ENCODE measurements at regions of chr19 and their contacts with region 1.

Region 1: DNA sequence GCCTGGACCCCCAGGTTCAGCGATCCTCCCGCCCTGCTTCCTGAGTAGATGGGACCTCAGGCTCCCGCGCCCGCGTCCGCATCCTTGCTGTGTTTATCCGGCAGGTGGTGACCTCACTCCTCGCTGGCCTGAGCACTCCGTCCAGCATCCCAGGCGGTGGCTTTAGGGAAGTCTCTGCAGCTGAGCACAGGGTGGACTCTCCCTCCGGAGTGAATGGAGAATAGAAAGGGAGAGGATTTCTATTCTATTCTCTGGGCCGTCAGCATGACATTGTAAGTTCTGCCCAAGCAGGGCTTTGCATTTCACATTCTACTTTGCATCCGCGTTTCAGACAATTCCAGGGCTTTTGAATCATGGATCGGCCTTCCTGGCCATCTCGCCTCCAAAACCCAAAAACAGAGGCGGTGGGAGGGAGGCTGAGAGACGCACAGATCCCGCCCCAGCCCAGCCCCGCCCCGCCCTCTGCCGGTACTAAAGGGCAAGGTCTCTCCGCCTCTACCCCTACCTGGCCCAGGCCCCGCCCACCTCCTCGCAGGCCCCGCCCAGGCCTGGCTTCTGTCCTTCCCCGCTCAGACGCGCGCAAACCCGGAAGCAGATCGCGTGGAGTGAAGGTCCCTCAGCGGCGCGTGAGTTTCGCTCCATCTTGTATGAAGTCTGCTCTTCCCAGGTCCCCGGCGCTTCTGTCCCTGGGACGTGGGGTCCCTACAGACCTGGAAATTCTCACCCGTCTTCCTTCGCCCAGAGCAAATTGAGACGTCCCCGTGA is at the start of gene ZNF525:
- DNase-seq: peak; percentile 81 to 94
- H3K4me3 ChIP-seq: peak within 1 kb of the TSS; percentile 63 to 67
- H3K27ac ChIP-seq: peak within 1 kb of the TSS; percentile 73 to 81
- H3K4me1 ChIP-seq: peaks cover 0 to 6% of the 10 kb centered on the region in 2 donors
- H3K27me3 ChIP-seq: no peaks in the 10 kb centered on the region
- CTCF ChIP-seq: peak in 1 of 3 experiments; percentile 26
- total RNA-seq, gene ZNF525: 3.0 TPM

Region 2: GRCh38 chr19:52690369-52691214 is 674.7 kb before region 1 on chr19:
- intact Hi-C with region 1: loop called (anchors 10 kb)
- DNase-seq: peak; percentile 89 to 98
- H3K4me3 ChIP-seq: peak overlapping the region; percentile 56 to 89
- H3K27ac ChIP-seq: peak overlapping the region; percentile 95 to 98
- H3K4me1 ChIP-seq: peaks cover 3 to 28% of the 10 kb centered on the region in 2 donors
- H3K27me3 ChIP-seq: no peaks in the 10 kb centered on the region
- CTCF ChIP-seq: peak in 2 of 3 experiments; percentile 16 to 19

Region 3: GRCh38 chr19:53333463-53334449 is 31.6 kb before region 1 on chr19 and contains the start of gene ZNF845:
- intact Hi-C with region 1: loop called (anchors 1 kb)
- DNase-seq: peak; percentile 75 to 98
- H3K4me3 ChIP-seq: peak within 1 kb of the TSS; percentile 66 to 73
- H3K27ac ChIP-seq: peak within 1 kb of the TSS; percentile 77 to 82
- H3K4me1 ChIP-seq: peaks cover 0 to 4% of the 10 kb centered on the region in 2 donors
- H3K27me3 ChIP-seq: no peaks in the 10 kb centered on the region
- CTCF ChIP-seq: no peak
- total RNA-seq, gene ZNF845: 3.1 TPM

Region 4: GRCh38 chr19:53394974-53395839 is 29.9 kb after region 1 on chr19 and contains the start of gene ZNF765:
- intact Hi-C with region 1: loop called (anchors 1 kb)
- DNase-seq: peak; percentile 82 to 97
- H3K4me3 ChIP-seq: peak within 1 kb of the TSS; percentile 65 to 68
- H3K27ac ChIP-seq: peak within 1 kb of the TSS; percentile 80 to 83
- H3K4me1 ChIP-seq: peaks cover 0 to 13% of the 10 kb centered on the region in 2 donors
- H3K27me3 ChIP-seq: no peaks in the 10 kb centered on the region
- CTCF ChIP-seq: peak; percentile 47 to 58 (median 55)
- total RNA-seq, gene ZNF765: 3.5 TPM

Region 5: DNA sequence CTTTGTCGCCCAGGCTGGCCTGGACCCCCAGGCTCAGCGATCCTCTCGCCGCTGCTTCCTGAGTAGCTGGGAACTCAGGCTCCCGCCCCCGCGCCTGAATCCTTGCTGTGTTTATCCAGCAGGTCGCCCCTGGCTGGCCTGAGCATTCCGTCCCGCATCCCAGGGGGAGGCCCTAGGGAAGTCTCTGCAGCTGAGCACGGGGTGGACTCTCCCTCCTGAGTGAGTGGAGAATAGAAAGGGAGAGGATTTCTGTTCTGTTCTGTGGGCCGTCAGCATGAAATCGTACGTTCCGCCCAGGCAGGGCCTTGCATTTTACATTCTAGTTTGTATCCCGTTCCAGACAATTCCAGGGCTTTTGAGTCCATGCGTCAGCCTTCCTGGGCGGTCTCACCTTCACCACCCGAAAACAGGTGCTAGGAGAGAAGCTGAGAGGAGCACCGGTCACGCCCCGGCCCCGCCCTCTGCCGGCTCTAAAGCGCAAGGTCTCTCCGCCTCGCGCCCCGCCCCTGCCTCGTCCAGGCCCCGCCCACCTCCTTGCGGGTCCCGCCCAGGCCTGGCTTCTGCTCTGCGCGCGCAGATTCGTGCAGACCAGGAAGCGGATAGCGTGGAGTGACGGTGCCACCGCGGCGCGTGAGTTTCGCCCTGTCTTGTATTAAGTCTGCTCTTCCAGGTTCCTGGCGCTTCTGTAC is 66.2 kb after region 1 on chr19 and contains the start of gene ZNF761:
- intact Hi-C with region 1: loop called (anchors 5 kb)
- DNase-seq: peak; percentile 73 to 97
- H3K4me3 ChIP-seq: peak within 1 kb of the TSS; percentile 66 to 96
- H3K27ac ChIP-seq: peak within 1 kb of the TSS; percentile 67 to 77
- H3K4me1 ChIP-seq: no peaks in the 10 kb centered on the region
- H3K27me3 ChIP-seq: no peaks in the 10 kb centered on the region
- CTCF ChIP-seq: peak in 2 of 3 experiments; percentile 34 to 50
- total RNA-seq, gene ZNF761: 1.4 TPM

Region 6: GRCh38 chr19:53467485-53468262 is 102.4 kb after region 1 on chr19 and contains the start of gene ZNF813:
- intact Hi-C with region 1: loop called (anchors 1 kb)
- DNase-seq: peak; percentile 76 to 97
- H3K4me3 ChIP-seq: peak within 1 kb of the TSS; percentile 78 to 84
- H3K27ac ChIP-seq: peak within 1 kb of the TSS; percentile 50 to 56
- H3K4me1 ChIP-seq: peaks cover 0 to 11% of the 10 kb centered on the region in 2 donors
- H3K27me3 ChIP-seq: no peaks in the 10 kb centered on the region
- CTCF ChIP-seq: no peak
- total RNA-seq, gene ZNF813: 1.3 TPM

Region 7: GRCh38 chr19:53982611-53983010 is 617.3 kb after region 1 on chr19:
- intact Hi-C with region 1: no loop called
- DNase-seq: no peak
- H3K4me3 ChIP-seq: peak overlapping the region; percentile 8 to 47
- H3K27ac ChIP-seq: no peak overlapping the region
- H3K4me1 ChIP-seq: peaks cover 3% of the 10 kb centered on the region in 2 donors
- H3K27me3 ChIP-seq: peaks cover 17% of the 10 kb centered on the region
- CTCF ChIP-seq: no peak

Measured in ascending aorta (tissue), 2 donors.